A673 (cell line): ENCODE measurements at regions of chr11 and their contacts with region 1.

Region 1: GRCh38 chr11:73439002-73439843 is 63.0 kb downstream of the RELT start:
- DNase-seq: peak; percentile 19
- H3K4me3 ChIP-seq: no peak overlapping the region
- H3K27ac ChIP-seq: no peak overlapping the region
- H3K4me1 ChIP-seq: no peaks in the 10 kb centered on the region
- H3K27me3 ChIP-seq: no peaks in the 10 kb centered on the region
- CTCF ChIP-seq: no peak

Region 2: DNA sequence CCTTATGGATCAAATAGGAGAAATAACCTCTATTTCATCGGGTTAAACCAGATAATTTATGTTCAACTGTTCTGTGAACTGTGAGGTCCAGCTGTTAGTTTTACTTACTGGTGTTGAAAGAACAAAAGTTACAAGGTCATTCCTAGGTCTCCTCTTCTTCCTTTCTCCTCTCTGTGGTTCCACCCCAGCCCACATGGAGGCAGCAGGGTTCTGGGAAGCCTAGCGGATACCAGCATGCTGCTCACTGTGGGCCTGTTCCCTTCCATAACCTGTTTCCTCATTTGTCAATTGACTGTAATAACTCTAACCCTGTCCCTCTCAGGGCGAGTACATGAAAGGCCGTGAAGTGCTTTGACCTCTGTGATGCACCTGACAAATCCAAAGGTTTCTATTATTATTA is 35.2 kb before region 1 on chr11:
- CTCF ChIA-PET with region 1: interaction called, 10 read pairs
- POLR2A ChIA-PET with region 1: no interaction called
- intact Hi-C with region 1: no loop called
- DNase-seq: peak; percentile 81
- H3K4me3 ChIP-seq: no peak overlapping the region
- H3K27ac ChIP-seq: no peak overlapping the region
- H3K4me1 ChIP-seq: no peaks in the 10 kb centered on the region
- H3K27me3 ChIP-seq: no peaks in the 10 kb centered on the region
- CTCF ChIP-seq: peak; percentile 76